ENCODE measurements at regions of chr4 and their contacts with region 1.

Region 1: DNA sequence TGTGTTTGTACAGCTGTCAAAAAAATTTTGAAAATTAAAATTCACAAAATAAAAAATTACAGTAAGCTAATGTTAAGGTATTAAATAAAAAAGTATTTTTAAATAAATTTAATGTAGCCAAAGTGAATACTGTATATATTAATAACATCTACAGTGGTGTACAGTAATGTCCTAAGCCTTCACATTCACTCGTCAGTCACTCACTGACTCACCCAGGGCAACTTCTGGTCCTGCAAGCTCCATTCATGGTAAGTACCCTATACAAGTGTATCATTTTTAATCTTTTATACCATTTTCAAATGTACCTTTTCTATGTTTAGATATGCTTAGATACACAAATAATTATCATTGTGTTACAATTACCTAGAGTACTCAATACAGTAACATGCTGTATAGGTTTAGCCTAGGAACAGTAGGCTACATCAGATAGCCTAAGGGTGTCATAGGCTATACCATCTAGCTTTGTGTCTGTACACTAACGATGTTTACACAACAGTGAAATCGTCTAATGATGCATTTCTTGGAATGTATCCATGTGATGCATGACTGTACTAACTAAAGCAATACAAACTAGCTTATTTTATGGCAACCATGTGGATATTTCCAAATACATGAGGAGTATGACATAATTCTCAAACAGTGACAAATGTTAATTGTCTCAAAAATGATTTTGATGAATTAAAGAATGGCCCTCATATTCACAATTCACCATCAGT is 13.7 kb downstream of the DDX60 start:
- DNase-seq: peak; percentile 94
- H3K4me3 Mint-ChIP-seq: no peak overlapping the region
- H3K27ac Mint-ChIP-seq: no peak overlapping the region
- H3K4me1 Mint-ChIP-seq: no peaks in the 10 kb centered on the region
- H3K27me3 Mint-ChIP-seq: no peaks in the 10 kb centered on the region
- CTCF ChIP-seq: no peak

Region 2: DNA sequence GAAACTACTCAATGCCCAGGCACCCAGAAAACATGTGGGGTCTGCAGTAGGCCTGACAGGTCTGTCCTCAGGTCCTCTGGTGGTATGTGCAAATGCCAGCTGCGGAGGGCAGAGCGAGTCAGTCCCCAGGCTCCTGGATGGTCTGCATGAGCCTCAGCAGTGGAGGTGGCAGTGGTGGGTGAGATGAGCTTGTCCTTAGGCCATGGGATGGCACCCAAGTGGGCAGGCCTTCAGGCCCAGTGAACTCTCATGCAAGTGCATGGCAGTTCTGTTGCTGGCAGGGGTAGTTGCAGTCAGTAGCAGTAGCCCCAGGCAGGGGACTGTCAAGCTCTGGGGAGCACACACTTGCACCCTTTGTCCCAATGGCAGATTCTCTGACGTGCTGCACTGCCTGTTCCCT is 318.9 kb before region 1 on chr4:
- CTCF ChIA-PET with region 1: no interaction called
- POLR2A ChIA-PET with region 1: no interaction called
- intact Hi-C with region 1: no loop called
- DNase-seq: no peak
- H3K4me3 Mint-ChIP-seq: no peak overlapping the region
- H3K27ac Mint-ChIP-seq: no peak overlapping the region
- H3K4me1 Mint-ChIP-seq: no peaks in the 10 kb centered on the region
- H3K27me3 Mint-ChIP-seq: no peaks in the 10 kb centered on the region
- CTCF ChIP-seq: no peak

Region 3: DNA sequence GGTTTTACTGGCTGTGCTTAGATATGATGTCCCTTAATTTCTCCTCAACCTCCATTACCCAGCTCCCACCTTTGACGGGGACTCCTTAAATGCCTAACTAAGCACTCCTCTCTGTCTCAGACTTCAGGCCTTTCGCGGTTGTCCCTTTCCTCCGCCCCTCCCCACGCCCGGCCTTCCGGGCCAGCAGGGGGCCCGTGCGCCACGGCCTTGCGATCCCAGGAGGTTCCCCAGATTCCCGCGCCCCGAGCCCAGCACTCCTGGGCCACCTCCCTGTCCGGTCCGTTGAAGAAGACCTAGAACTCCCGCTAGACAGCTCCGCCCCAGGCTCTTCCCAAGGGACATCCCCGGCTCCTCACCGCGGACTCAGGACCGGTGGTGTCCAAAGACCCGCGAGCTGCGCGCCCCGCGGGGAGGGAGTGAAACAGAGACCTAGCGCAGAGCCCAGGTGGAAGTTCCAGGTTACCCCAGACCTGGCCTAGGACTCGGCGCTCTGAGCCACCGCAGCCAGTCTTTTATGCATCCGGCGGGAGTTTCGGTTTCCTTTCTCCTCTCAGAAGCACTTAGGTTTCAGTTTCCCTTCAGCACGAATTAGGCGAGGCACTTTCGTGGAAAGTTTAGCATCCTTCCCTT is 13.5 kb after region 1 on chr4 and contains the start of gene DDX60:
- CTCF ChIA-PET with region 1: interaction called, 8 read pairs
- POLR2A ChIA-PET with region 1: interaction called, 14 read pairs
- intact Hi-C with region 1: no loop called
- DNase-seq: peak; percentile 87
- H3K4me3 Mint-ChIP-seq: peak within 1 kb of the TSS; percentile 95
- H3K27ac Mint-ChIP-seq: peak within 1 kb of the TSS; percentile 97
- H3K4me1 Mint-ChIP-seq: peaks cover 24% of the 10 kb centered on the region
- H3K27me3 Mint-ChIP-seq: no peaks in the 10 kb centered on the region
- CTCF ChIP-seq: peak; percentile 30
- total RNA-seq, gene DDX60: 4.7 and 7.9 TPM in 2 replicates

Measured in MCF 10A (cell line).